CD4-positive, alpha-beta T cell (primary cell): ENCODE measurements at regions of chr15 and their contacts with region 1.

Region 1: DNA sequence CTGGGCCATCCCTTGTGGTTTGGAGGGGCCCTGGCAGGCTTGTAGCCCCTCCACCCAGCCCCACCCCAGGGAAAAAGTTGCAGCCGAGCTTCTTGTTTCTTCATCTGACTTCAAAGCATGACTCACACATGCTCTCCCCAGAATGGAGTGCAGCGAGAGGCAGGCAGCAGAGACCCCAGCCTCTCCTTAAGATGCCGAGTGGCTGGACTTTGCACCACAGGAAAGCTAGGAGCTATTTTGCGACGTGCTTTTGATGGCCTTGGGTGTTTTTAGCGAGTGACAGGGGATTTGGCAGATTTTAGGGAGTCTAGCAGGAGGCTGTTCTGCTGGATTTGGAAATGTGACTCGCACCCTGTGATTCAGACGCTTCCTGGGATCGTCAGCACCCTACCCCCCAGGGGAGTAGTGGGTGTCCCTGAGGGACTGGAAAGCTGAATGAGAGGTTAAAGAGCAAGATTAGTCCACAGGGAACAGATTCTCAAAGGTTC is 14.2 kb downstream of the BAHD1 start:
- DNase-seq: peak in 3 of 14 experiments; percentile 27 to 57 (median 35)
- ATAC-seq: peak; percentile 36
- H3K4me3 ChIP-seq: peak overlapping the region; percentile 14
- H3K4me3 Mint-ChIP-seq: peak overlapping the region; percentile 81
- H3K27ac ChIP-seq: peak overlapping the region; percentile 46 to 68
- H3K27ac Mint-ChIP-seq: peak overlapping the region; percentile 84
- H3K4me1 ChIP-seq: peaks cover 78% of the 10 kb centered on the region
- H3K4me1 Mint-ChIP-seq: peaks cover 77% of the 10 kb centered on the region
- H3K27me3 ChIP-seq: no peaks in the 10 kb centered on the region
- H3K27me3 Mint-ChIP-seq: no peaks in the 10 kb centered on the region
- CTCF ChIP-seq: no peak

Region 2: GRCh38 chr15:40150163-40150925 is 304.6 kb before region 1 on chr15:
- CTCF ChIA-PET with region 1: no interaction called
- POLR2A ChIA-PET with region 1: no interaction called
- intact Hi-C with region 1: no loop called
- DNase-seq: peak in 3 of 14 experiments; percentile 23 to 35 (median 33)
- ATAC-seq: no peak
- H3K4me3 ChIP-seq: no peak overlapping the region
- H3K4me3 Mint-ChIP-seq: no peak overlapping the region
- H3K27ac ChIP-seq: no peak overlapping the region
- H3K27ac Mint-ChIP-seq: no peak overlapping the region
- H3K4me1 ChIP-seq: no peaks in the 10 kb centered on the region
- H3K4me1 Mint-ChIP-seq: no peaks in the 10 kb centered on the region
- H3K27me3 ChIP-seq: no peaks in the 10 kb centered on the region
- H3K27me3 Mint-ChIP-seq: no peaks in the 10 kb centered on the region
- CTCF ChIP-seq: no peak

Region 3: GRCh38 chr15:40382580-40383456 is 72.1 kb before region 1 on chr15 and contains the start of gene KNSTRN:
- CTCF ChIA-PET with region 1: no interaction called
- POLR2A ChIA-PET with region 1: no interaction called
- intact Hi-C with region 1: no loop called
- DNase-seq: peak; percentile 86 to 96 (median 90)
- ATAC-seq: peak; percentile 98
- H3K4me3 ChIP-seq: peak within 1 kb of the TSS; percentile 69
- H3K4me3 Mint-ChIP-seq: peak within 1 kb of the TSS; percentile 94
- H3K27ac ChIP-seq: no peak within 1 kb of the TSS
- H3K27ac Mint-ChIP-seq: no peak within 1 kb of the TSS
- H3K4me1 ChIP-seq: peaks cover 15% of the 10 kb centered on the region
- H3K4me1 Mint-ChIP-seq: peaks cover 15% of the 10 kb centered on the region
- H3K27me3 ChIP-seq: no peaks in the 10 kb centered on the region
- H3K27me3 Mint-ChIP-seq: no peaks in the 10 kb centered on the region
- CTCF ChIP-seq: no peak
- total RNA-seq, gene KNSTRN: 2.8 to 3.0 TPM

Region 4: GRCh38 chr15:40564591-40565332 is 109.8 kb after region 1 on chr15 and contains the start of gene CCDC32:
- CTCF ChIA-PET with region 1: no interaction called
- POLR2A ChIA-PET with region 1: interaction called, 6 read pairs
- intact Hi-C with region 1: loop called in 1 of 2 experiments (anchors 5 kb)
- DNase-seq: peak; percentile 84 to 99 (median 92)
- ATAC-seq: peak; percentile 93
- H3K4me3 ChIP-seq: peak within 1 kb of the TSS; percentile 76
- H3K4me3 Mint-ChIP-seq: peak within 1 kb of the TSS; percentile 97
- H3K27ac ChIP-seq: peak within 1 kb of the TSS; percentile 85 to 89
- H3K27ac Mint-ChIP-seq: peak within 1 kb of the TSS; percentile 88
- H3K4me1 ChIP-seq: peaks cover 34% of the 10 kb centered on the region
- H3K4me1 Mint-ChIP-seq: peaks cover 43% of the 10 kb centered on the region
- H3K27me3 ChIP-seq: no peaks in the 10 kb centered on the region
- H3K27me3 Mint-ChIP-seq: no peaks in the 10 kb centered on the region
- CTCF ChIP-seq: no peak
- total RNA-seq, gene CCDC32: 20.9 to 21.3 TPM